Activated CD4-positive, alpha-beta T cell treated with anti-CD3 and anti-CD28 coated beads for 36 hours (primary cell): ENCODE measurements at regions of chr17 and their contacts with region 1.

Region 1: DNA sequence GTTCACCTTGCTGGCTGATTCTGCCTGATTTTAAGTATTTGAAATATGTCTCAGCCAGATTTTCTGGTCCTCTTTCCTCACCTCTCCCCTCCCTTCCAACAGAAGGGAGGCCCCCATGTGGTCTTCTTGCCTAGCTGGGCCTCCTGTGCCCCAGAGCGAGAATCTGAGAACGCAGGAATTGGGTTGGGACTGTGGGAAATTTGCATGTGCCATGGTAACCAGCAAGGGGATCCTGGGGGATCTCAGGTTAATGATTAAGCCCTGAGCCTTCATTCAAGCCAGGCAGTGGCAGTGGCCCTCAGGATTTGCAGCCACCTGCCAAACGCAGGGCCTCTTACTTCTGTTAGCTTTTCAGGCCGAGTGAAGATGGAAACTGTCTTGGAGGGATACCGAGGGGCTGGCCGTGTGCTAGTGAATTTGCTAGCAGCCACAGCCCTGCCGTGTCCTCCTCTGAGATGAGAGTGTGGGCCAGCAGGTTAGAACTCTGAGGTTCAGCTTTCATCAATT is 40.2 kb downstream of the KSR1 start:
- DNase-seq: no peak
- ATAC-seq: no peak
- H3K4me3 Mint-ChIP-seq: no peak overlapping the region
- H3K27ac Mint-ChIP-seq: no peak overlapping the region
- H3K4me1 Mint-ChIP-seq: peaks cover 20% of the 10 kb centered on the region
- H3K27me3 Mint-ChIP-seq: no peaks in the 10 kb centered on the region

Region 2: GRCh38 chr17:27519550-27519949 is 23.1 kb after region 1 on chr17:
- CTCF ChIA-PET with region 1: interaction called, 3 read pairs
- POLR2A ChIA-PET with region 1: no interaction called
- intact Hi-C with region 1: loop called in 1 of 2 experiments (anchors 2 kb)
- DNase-seq: no peak
- ATAC-seq: no peak
- H3K4me3 Mint-ChIP-seq: no peak overlapping the region
- H3K27ac Mint-ChIP-seq: no peak overlapping the region
- H3K4me1 Mint-ChIP-seq: peaks cover 46% of the 10 kb centered on the region
- H3K27me3 Mint-ChIP-seq: no peaks in the 10 kb centered on the region